Prostate gland (tissue), 2 donors: ENCODE measurements at regions of chr12 and their contacts with region 1.

Region 1: GRCh38 chr12:110888256-110888991 is 32.0 kb downstream of the MYL2 start:
- DNase-seq: no peak
- H3K4me3 ChIP-seq: no peak overlapping the region
- H3K27ac ChIP-seq: no peak overlapping the region
- H3K4me1 ChIP-seq: no peaks in the 10 kb centered on the region
- H3K27me3 ChIP-seq: no peaks in the 10 kb centered on the region
- CTCF ChIP-seq: peak in 1 of 4 experiments; percentile 7
- POLR2A ChIP-seq: no peak

Region 2: DNA sequence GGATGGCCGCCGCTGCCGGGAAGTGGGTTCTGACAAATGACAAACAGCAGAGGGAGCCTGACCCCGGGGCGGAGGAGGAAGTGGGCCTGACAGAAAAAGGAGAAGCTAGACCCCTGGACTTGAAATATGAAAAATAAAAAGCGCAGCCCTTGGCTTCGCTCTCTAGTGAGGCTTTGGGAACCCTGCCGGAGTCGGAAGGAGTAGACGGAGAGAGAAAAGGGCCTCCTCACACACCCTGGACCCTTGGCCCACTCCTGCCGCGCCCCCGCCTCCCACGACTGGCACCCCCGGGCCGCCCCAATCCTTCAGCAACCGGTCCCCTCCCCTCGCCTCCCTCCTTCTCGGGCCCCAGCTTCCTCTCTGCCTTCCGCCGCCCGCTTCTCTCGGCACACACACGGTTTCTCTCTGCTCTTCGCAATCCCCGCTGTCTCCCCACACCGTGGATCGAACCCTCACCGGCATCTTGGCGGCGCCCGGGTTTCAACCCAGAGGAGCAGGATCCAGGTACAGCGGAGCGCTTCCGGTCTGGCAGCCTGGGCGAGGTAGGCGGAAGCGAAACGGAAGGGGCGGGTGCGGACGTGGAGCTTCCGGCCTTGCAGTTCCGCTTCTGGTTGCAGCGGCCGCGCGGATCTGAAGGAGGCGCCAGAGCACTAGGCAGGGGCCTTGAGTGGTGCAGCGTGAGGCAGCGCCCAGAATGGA is 438.5 kb before region 1 on chr12 and contains the start of gene ARPC3:
- intact Hi-C with region 1: loop called (anchors 5 kb)
- DNase-seq: peak; percentile 93
- H3K4me3 ChIP-seq: peak within 1 kb of the TSS; percentile 73 to 82
- H3K27ac ChIP-seq: peak within 1 kb of the TSS; percentile 79 to 82
- H3K4me1 ChIP-seq: peaks cover 3% of the 10 kb centered on the region
- H3K27me3 ChIP-seq: no peaks in the 10 kb centered on the region
- CTCF ChIP-seq: peak; percentile 55 to 94 (median 84)
- POLR2A ChIP-seq: peak; percentile 45
- total RNA-seq, gene ARPC3: 293 to 338 TPM

Region 3: DNA sequence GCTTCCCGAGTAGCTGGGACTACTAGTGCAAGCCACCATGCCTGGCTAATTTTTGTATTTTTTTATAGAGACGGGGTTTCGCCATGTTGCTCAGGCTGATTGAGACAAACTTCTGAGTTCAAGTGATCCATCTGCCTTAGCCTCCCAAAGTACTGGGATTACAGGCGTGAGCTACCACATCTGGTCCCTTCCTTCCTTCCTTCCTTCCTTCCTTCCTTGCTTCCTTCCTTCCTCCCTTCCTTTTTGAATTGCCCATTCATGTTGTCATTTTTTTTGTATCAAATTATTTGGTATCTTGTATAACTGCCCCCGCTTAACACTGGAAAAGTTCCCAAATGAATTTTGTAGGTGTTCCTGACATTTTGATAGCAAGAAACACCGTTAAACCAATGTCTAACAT is 374.6 kb before region 1 on chr12:
- intact Hi-C with region 1: loop called (anchors 10 kb)
- DNase-seq: no peak
- H3K4me3 ChIP-seq: no peak overlapping the region
- H3K27ac ChIP-seq: no peak overlapping the region
- H3K4me1 ChIP-seq: no peaks in the 10 kb centered on the region
- H3K27me3 ChIP-seq: no peaks in the 10 kb centered on the region
- CTCF ChIP-seq: no peak
- POLR2A ChIP-seq: no peak

Region 4: DNA sequence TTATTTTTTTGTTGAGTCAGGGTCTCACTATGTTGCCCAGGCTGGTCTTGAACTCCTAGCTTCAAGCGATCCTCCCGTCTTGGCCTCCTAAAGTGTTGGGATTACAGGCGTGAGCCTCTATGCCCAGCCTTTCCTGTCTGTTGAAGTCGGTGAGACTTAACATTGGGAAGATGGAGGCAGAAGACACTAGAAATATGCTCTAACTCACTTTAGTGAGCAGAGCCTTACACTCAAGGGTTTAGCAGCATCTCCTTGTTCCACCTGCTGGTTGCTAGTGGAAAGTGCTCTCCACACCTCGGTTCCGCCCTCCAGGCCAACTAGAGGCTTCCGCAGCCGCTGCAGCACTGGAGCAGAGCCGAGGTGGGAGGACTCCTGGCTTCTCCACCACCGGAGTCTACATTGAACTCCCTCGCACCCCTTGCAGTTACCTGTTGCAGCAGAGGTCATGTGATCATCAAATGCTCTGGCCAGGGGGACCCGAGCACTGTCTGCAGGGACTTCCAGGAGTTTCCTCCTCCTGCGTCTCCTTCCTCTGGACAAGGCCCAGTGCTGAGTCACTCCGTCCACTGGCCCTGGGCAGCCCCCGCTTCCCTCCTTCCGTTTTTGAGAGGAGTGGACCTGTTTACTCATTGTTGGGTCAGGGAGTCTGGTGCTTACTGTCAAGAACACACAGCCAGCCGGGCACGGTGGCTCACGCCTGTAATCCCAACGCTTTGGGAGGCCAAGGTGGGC is 190.1 kb before region 1 on chr12:
- intact Hi-C with region 1: loop called (anchors 10 kb)
- DNase-seq: peak; percentile 46
- H3K4me3 ChIP-seq: no peak overlapping the region
- H3K27ac ChIP-seq: no peak overlapping the region
- H3K4me1 ChIP-seq: no peaks in the 10 kb centered on the region
- H3K27me3 ChIP-seq: no peaks in the 10 kb centered on the region
- CTCF ChIP-seq: peak; percentile 27 to 75 (median 48)
- POLR2A ChIP-seq: no peak